ENCODE measurements at regions of chr1 and their contacts with region 1.

Region 1: GRCh38 chr1:44594871-44595746 is 79.2 kb downstream of the TMEM53 start:
- DNase-seq: peak; percentile 61
- H3K4me3 ChIP-seq: no peak overlapping the region
- H3K27ac ChIP-seq: no peak overlapping the region
- H3K4me1 ChIP-seq: no peaks in the 10 kb centered on the region
- H3K27me3 ChIP-seq: peaks cover 10% of the 10 kb centered on the region
- CTCF ChIP-seq: peak; percentile 95

Region 2: GRCh38 chr1:44089371-44090049 is 505.6 kb before region 1 on chr1:
- CTCF ChIA-PET with region 1: no interaction called
- POLR2A ChIA-PET with region 1: no interaction called
- intact Hi-C with region 1: loop called (anchors 5 kb)
- DNase-seq: no peak
- H3K4me3 ChIP-seq: no peak overlapping the region
- H3K27ac ChIP-seq: no peak overlapping the region
- H3K4me1 ChIP-seq: no peaks in the 10 kb centered on the region
- H3K27me3 ChIP-seq: no peaks in the 10 kb centered on the region
- CTCF ChIP-seq: no peak

Region 3: GRCh38 chr1:44217809-44218410 is 377.2 kb before region 1 on chr1:
- CTCF ChIA-PET with region 1: interaction called, 4 read pairs
- POLR2A ChIA-PET with region 1: no interaction called
- intact Hi-C with region 1: loop called (anchors 5 kb)
- DNase-seq: peak; percentile 72
- H3K4me3 ChIP-seq: no peak overlapping the region
- H3K27ac ChIP-seq: no peak overlapping the region
- H3K4me1 ChIP-seq: peaks cover under 1% of the 10 kb centered on the region
- H3K27me3 ChIP-seq: no peaks in the 10 kb centered on the region
- CTCF ChIP-seq: peak; percentile 94

Region 4: GRCh38 chr1:44377925-44378784 is 217.0 kb before region 1 on chr1:
- CTCF ChIA-PET with region 1: interaction called, 11 read pairs
- POLR2A ChIA-PET with region 1: no interaction called
- intact Hi-C with region 1: loop called (anchors 1 kb)
- DNase-seq: peak; percentile 71
- H3K4me3 ChIP-seq: no peak overlapping the region
- H3K27ac ChIP-seq: no peak overlapping the region
- H3K4me1 ChIP-seq: no peaks in the 10 kb centered on the region
- H3K27me3 ChIP-seq: peaks cover 7% of the 10 kb centered on the region
- CTCF ChIP-seq: peak; percentile 78